PC-9 (cell line): ENCODE measurements at regions of chr13 and their contacts with region 1.

Region 1: DNA sequence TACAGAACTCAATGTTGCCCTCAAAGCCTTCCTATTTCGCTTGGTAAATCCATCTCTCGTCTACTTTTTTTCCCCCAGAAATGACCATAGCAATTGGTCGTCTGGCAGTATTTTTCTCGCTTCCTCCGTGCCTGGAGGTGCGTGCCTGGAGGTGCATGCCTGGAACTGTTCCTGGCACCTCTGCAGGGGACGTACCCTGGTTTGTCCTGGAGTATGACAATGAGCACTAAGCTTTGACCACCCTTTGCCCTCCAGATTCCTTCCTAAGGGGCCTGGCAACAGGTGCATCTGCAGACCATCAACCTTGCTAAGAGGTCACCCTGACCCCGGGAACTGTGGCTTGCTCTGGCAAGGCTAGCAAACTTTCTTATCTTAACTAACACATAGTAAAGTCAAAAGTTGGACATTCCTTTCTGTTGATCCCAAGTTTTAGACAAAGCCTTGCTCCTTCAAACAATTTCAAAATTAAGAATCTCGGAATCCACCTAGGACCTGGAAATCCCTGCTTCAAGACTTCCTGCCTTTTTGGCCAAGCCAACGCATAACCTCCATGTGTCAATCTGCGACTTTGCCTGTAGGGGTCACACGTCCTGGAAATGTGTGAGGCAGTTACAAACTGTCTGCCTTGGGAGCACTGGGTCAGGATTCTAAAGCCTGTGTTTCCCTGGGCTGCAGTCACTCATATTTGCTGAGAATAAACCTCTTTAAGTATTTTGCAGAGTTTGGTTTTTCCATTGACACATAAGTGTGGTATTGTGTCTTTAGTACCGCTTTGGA is 28.8 kb upstream of the TUBGCP3 start:
- DNase-seq: no peak
- H3K4me3 ChIP-seq: no peak overlapping the region
- H3K27ac ChIP-seq: no peak overlapping the region
- H3K4me1 ChIP-seq: no peaks in the 10 kb centered on the region
- H3K27me3 ChIP-seq: peaks cover 62% of the 10 kb centered on the region
- CTCF ChIP-seq: peak; percentile 72

Region 2: DNA sequence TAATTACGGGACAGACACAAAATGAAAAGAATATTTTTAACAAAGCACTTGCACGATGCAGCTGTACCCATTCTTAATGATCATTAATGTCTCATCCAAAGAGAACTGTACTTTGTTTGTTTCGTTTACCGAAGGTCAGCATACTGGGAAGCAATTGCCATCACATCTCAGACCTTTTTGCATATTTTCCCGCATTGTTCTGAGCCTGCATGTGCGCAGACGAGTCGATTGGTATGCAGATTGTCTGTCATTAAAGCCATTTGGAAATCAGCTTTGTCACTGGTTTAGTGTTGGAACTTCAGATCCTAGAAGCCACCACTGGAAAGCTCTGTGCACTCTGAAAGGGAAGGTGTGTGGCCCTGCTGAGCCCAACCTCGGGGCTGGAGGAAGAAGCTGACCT is 225.0 kb before region 1 on chr13:
- CTCF ChIA-PET with region 1: no interaction called
- POLR2A ChIA-PET with region 1: no interaction called
- intact Hi-C with region 1: no loop called
- DNase-seq: no peak
- H3K4me3 ChIP-seq: no peak overlapping the region
- H3K27ac ChIP-seq: no peak overlapping the region
- H3K4me1 ChIP-seq: no peaks in the 10 kb centered on the region
- H3K27me3 ChIP-seq: peaks cover 85% of the 10 kb centered on the region
- CTCF ChIP-seq: no peak

Region 3: GRCh38 chr13:112489199-112489598 is 127.6 kb before region 1 on chr13:
- CTCF ChIA-PET with region 1: interaction called, 17 read pairs
- POLR2A ChIA-PET with region 1: no interaction called
- intact Hi-C with region 1: no loop called
- DNase-seq: no peak
- H3K4me3 ChIP-seq: no peak overlapping the region
- H3K27ac ChIP-seq: no peak overlapping the region
- H3K4me1 ChIP-seq: no peaks in the 10 kb centered on the region
- H3K27me3 ChIP-seq: no peaks in the 10 kb centered on the region
- CTCF ChIP-seq: no peak

Region 4: DNA sequence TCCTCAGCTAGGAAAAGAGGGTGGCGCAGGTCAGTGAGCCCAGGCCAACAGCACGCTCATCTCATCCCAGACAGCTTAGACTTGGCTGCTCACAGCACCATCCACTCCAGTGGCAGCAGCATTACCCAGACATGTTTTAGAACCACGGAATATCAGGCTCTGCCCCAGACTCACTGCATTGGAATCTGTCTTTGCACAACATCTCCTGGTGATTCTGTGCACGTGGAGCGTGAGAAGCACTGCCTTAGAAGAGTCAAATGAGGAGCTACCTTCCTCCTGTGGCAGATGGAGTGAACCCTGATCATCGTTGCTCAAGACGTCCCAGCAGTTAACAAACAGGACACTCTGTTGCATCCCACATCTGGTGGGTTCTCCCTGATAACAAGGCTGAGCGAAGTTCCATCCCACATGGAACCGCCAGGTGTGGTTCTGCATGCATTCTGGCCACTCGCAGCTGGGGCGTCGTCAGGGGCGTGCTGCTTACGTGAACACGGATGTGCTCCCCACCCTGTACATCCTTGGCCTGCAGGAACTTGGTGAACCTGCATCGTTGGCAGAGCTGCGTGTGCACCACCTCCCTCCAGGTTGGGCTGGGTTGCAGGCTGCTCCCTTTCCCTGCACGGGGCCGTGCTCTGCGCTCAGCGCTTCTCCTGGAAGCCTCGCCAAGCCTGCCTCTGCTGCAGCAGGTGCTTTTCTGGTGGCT is 47.9 kb after region 1 on chr13:
- CTCF ChIA-PET with region 1: no interaction called
- POLR2A ChIA-PET with region 1: no interaction called
- intact Hi-C with region 1: no loop called
- DNase-seq: no peak
- H3K4me3 ChIP-seq: no peak overlapping the region
- H3K27ac ChIP-seq: no peak overlapping the region
- H3K4me1 ChIP-seq: no peaks in the 10 kb centered on the region
- H3K27me3 ChIP-seq: no peaks in the 10 kb centered on the region
- CTCF ChIP-seq: no peak

Region 5: DNA sequence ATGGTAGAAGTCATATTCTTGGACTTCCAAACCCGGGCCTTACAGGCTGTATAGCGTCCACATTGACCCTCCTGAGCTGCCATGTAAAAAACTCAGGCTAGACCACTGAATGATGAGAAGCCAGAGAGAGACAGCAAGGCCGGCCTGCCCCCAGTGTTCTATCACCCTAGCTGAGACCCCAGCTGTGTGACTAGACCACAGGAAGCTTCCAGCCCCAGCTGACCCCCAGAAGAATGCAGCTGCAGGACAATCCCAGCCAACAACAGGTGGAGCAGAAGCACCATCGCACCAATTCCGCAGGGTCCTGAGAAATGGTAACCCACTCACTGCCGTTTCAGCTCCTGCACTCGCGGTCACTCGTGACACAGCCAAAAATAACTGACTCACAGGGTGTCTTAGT is 70.2 kb after region 1 on chr13:
- CTCF ChIA-PET with region 1: no interaction called
- POLR2A ChIA-PET with region 1: no interaction called
- intact Hi-C with region 1: no loop called
- DNase-seq: no peak
- H3K4me3 ChIP-seq: no peak overlapping the region
- H3K27ac ChIP-seq: no peak overlapping the region
- H3K4me1 ChIP-seq: peaks cover 25% of the 10 kb centered on the region
- H3K27me3 ChIP-seq: no peaks in the 10 kb centered on the region
- CTCF ChIP-seq: no peak